ENCODE measurements at regions of chr3 and their contacts with region 1.

Region 1: DNA sequence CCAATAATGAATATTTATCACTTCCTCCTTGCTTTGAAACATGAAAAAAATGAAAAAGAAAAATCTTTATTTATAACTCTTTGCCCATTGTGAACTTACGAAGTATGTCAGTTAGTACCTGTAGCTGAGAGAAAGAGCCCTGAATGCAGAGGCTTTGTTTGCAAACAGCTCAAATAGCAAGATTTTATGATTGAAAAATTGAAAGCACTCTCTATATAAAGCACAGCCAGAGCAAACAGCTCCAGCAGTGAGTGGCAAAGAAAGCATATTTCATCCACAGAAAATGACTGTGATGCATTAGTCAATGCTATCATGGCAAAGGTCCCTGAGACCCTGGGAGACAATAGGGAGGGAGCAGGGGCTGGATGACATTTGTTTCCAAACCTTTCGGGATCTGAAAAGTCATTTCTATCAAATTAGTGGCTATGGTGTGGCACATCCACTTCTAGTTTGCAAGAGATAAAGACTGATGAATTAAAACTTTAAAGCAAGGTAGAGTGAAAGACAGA is 576.1 kb downstream of the OTOL1 start:
- DNase-seq: no peak
- ATAC-seq: no peak
- H3K4me3 ChIP-seq: no peak overlapping the region
- H3K27ac ChIP-seq: no peak overlapping the region
- H3K4me1 ChIP-seq: no peaks in the 10 kb centered on the region
- H3K27me3 ChIP-seq: no peaks in the 10 kb centered on the region
- CTCF ChIP-seq: no peak
- POLR2A ChIP-seq: no peak
- RAD21 ChIP-seq: no peak

Region 2: DNA sequence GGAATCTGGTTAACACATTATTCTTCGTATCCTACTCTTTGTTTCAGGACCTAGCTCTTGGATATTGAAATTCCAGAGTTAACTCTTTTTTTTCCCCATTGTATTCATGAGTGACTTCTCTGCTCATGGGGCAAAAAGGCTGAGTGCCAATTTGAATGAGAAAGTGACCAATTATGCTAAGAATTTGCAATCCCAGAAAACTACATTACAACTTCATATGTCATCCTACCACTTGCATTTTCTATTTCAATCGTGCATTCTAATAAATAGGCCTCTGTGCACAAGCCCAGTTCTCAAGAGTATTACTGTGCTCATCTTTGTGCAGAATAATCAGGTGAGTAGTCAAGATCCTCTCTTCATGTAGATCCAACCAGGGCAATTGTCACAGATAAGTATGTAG is 38.3 kb before region 1 on chr3:
- CTCF ChIA-PET with region 1: no interaction called
- POLR2A ChIA-PET with region 1: interaction called, 16 read pairs
- dilution Hi-C with region 1: no loop called
- in situ Hi-C with region 1: no loop called
- intact Hi-C with region 1: no loop called
- DNase-seq: peak; percentile 54
- ATAC-seq: peak; percentile 53; the same call in 1 of the 2 replicates
- H3K4me3 ChIP-seq: no peak overlapping the region
- H3K27ac ChIP-seq: no peak overlapping the region
- H3K4me1 ChIP-seq: no peaks in the 10 kb centered on the region
- H3K27me3 ChIP-seq: no peaks in the 10 kb centered on the region
- CTCF ChIP-seq: no peak
- POLR2A ChIP-seq: no peak
- RAD21 ChIP-seq: no peak

Region 3: GRCh38 chr3:164004205-164004604 is 1931.5 kb after region 1 on chr3:
- CTCF ChIA-PET with region 1: no interaction called
- POLR2A ChIA-PET with region 1: no interaction called
- dilution Hi-C with region 1: no loop called
- in situ Hi-C with region 1: no loop called
- intact Hi-C with region 1: loop called (anchors 5 kb)
- DNase-seq: no peak
- ATAC-seq: no peak
- H3K4me3 ChIP-seq: no peak overlapping the region
- H3K27ac ChIP-seq: no peak overlapping the region
- H3K4me1 ChIP-seq: no peaks in the 10 kb centered on the region
- H3K27me3 ChIP-seq: no peaks in the 10 kb centered on the region
- CTCF ChIP-seq: no peak
- POLR2A ChIP-seq: no peak
- RAD21 ChIP-seq: no peak